ENCODE measurements at regions of chr22 and their contacts with region 1.

Region 1: GRCh38 chr22:37229805-37230672 is 14.0 kb downstream of the RAC2 start:
- DNase-seq: peak; percentile 96
- H3K4me3 Mint-ChIP-seq: peak overlapping the region; percentile 79
- H3K27ac Mint-ChIP-seq: peak overlapping the region; percentile 95
- H3K4me1 Mint-ChIP-seq: peaks cover 82% of the 10 kb centered on the region
- H3K27me3 Mint-ChIP-seq: no peaks in the 10 kb centered on the region

Region 2: GRCh38 chr22:37077884-37078485 is 152.1 kb before region 1 on chr22:
- intact Hi-C with region 1: loop called (anchors 2 kb)
- DNase-seq: peak; percentile 96
- H3K4me3 Mint-ChIP-seq: peak overlapping the region; percentile 79
- H3K27ac Mint-ChIP-seq: peak overlapping the region; percentile 98
- H3K4me1 Mint-ChIP-seq: peaks cover 56% of the 10 kb centered on the region
- H3K27me3 Mint-ChIP-seq: no peaks in the 10 kb centered on the region

Region 3: DNA sequence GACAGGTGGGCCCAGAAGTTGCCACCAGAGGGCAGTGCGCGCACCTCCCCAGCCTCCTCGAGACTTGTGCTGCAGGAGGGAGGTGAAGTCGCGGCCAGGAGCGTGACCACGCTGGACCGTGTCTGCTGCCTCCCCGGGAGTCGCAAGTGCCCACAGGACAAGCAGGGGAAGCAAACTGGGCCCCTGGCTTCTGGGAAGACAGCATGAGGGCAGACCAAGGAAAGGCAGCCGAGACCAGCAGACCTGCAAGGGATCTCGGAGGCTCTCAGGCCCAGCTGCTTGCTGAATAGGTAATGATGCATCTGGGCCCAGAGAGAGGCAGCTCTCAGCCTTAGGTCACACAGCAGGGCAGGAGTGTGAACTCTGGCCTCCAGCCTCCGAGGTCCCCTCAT is 63.4 kb before region 1 on chr22:
- intact Hi-C with region 1: loop called (anchors 1 kb)
- DNase-seq: peak; percentile 94
- H3K4me3 Mint-ChIP-seq: peak overlapping the region; percentile 69
- H3K27ac Mint-ChIP-seq: peak overlapping the region; percentile 78
- H3K4me1 Mint-ChIP-seq: peaks cover 69% of the 10 kb centered on the region
- H3K27me3 Mint-ChIP-seq: peaks cover 2% of the 10 kb centered on the region

Region 4: DNA sequence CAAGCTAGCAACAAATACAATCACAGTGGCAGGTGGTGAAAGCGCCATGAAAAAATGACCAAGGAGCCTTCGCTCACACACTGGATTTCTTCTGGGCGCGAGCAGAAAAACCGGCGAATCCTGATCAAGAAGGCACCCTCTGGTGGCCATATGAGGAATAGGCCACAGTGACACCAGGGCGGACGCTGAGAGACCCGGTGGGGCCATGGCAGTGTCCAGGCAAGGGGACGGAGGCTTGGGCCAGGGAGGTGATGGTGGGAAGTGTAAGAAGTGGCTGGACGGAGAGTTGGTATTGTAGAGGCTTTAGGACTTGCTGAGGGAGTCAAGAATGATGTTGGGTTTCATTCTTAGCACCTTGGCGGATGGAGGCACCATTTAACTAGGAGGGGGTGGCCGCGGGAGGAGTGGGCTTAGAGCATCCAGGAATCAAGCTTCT is 30.9 kb after region 1 on chr22:
- intact Hi-C with region 1: loop called (anchors 5 kb)
- DNase-seq: peak; percentile 90
- H3K4me3 Mint-ChIP-seq: no peak overlapping the region
- H3K27ac Mint-ChIP-seq: peak overlapping the region; percentile 38
- H3K4me1 Mint-ChIP-seq: peaks cover 30% of the 10 kb centered on the region
- H3K27me3 Mint-ChIP-seq: peaks cover 6% of the 10 kb centered on the region

Region 5: DNA sequence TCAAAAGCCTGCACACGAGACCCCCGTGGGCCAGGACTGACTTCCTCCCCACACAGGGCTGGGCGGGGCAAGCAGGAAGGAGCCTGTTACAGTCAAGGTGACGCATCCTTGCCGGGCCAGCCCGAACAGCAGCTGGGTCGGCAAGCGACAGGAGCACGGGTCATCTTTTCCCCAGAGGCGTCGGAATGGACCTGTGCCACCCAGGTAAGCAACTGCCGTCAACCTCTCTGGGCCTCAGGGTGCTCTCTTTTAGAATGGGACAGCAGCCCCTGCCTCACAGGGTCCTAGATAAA is 52.3 kb after region 1 on chr22 and contains the start of gene CYTH4:
- intact Hi-C with region 1: loop called (anchors 2 kb)
- DNase-seq: peak; percentile 94
- H3K4me3 Mint-ChIP-seq: peak within 1 kb of the TSS; percentile 92
- H3K27ac Mint-ChIP-seq: peak within 1 kb of the TSS; percentile 99
- H3K4me1 Mint-ChIP-seq: peaks cover 61% of the 10 kb centered on the region
- H3K27me3 Mint-ChIP-seq: no peaks in the 10 kb centered on the region
- total RNA-seq, gene CYTH4: 43.5 and 44.9 TPM in 2 replicates

Region 6: GRCh38 chr22:37394341-37394740 is 164.3 kb after region 1 on chr22:
- intact Hi-C with region 1: no loop called
- DNase-seq: no peak
- H3K4me3 Mint-ChIP-seq: no peak overlapping the region
- H3K27ac Mint-ChIP-seq: no peak overlapping the region
- H3K4me1 Mint-ChIP-seq: no peaks in the 10 kb centered on the region
- H3K27me3 Mint-ChIP-seq: no peaks in the 10 kb centered on the region